SK-N-SH (cell line): ENCODE measurements at regions of chr13 and their contacts with region 1.

Region 1: GRCh38 chr13:29508130-29508875 is 87.2 kb downstream of the SLC7A1 start:
- DNase-seq: peak; percentile 90
- H3K4me3 ChIP-seq: peak overlapping the region in 1 of 2 experiments; percentile 32; a peak in 1 of 4 replicates
- H3K27ac ChIP-seq: peak overlapping the region in 1 of 2 experiments; percentile 78; a peak in 2 of 4 replicates
- H3K4me1 ChIP-seq: peaks cover 0 to 26% of the 10 kb centered on the region in 2 experiments; a peak in 2 of 4 replicates
- H3K27me3 ChIP-seq: no peaks in the 10 kb centered on the region
- CTCF ChIP-seq: peak; percentile 96
- EP300 ChIP-seq: peak in 1 of 2 experiments; percentile 53; a peak in 1 of 4 replicates
- RAD21 ChIP-seq: peak; percentile 95

Region 2: DNA sequence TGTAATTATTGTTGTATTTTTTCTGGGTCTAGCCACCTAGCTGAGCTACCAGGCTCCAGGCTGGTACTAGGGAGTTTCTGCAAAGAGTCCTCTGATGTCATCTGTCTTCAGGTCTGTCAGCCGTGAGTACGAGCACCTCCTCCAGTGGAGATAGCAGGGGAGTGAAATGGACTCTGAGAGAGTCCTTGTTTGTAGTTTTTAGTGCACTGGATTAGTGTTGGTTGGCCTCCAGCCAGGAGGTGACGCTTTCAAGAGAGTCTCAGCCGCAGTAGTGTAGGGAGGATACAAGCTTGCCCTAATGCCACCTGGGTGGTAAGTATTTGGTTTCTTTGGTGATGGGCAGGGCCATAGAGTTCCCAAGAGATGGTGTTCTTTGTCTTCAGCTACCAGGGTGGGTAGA is 297.6 kb before region 1 on chr13:
- CTCF ChIA-PET with region 1: no interaction called
- POLR2A ChIA-PET with region 1: no interaction called
- DNase-seq: no peak
- H3K4me3 ChIP-seq: no peak overlapping the region
- H3K27ac ChIP-seq: no peak overlapping the region
- H3K4me1 ChIP-seq: no peaks in the 10 kb centered on the region
- H3K27me3 ChIP-seq: no peaks in the 10 kb centered on the region
- CTCF ChIP-seq: no peak
- EP300 ChIP-seq: no peak
- RAD21 ChIP-seq: no peak

Region 3: DNA sequence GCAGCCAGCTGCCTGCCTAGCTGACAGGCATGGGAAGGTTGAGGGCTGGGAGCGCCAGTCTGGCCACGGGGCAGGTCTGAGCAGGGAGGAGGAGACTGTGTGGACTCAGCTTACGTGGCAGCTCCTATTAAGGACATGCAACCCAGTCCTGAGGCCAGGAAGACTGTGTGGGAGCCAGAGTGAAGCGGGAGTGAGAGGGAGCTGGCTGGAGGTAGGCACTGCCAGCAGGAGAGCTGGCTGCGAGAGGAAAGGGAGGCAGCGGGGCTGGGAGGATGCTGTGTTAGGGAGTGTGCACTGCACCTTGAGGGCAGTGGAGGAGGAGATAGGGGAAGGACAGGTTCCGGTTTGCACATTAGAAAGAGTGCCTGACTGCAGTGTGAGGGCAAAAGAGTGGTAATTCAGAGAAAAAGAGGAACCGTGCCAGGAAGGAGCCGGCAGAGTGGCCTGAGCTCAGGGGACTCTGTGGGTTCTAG is 12.0 kb before region 1 on chr13:
- CTCF ChIA-PET with region 1: interaction called, 39 read pairs
- POLR2A ChIA-PET with region 1: no interaction called
- DNase-seq: no peak
- H3K4me3 ChIP-seq: no peak overlapping the region
- H3K27ac ChIP-seq: no peak overlapping the region
- H3K4me1 ChIP-seq: peaks cover 0 to 12% of the 10 kb centered on the region in 2 experiments; a peak in 2 of 4 replicates
- H3K27me3 ChIP-seq: no peaks in the 10 kb centered on the region; the same call in 1 of the 2 replicates
- CTCF ChIP-seq: no peak
- EP300 ChIP-seq: no peak
- RAD21 ChIP-seq: no peak

Region 4: DNA sequence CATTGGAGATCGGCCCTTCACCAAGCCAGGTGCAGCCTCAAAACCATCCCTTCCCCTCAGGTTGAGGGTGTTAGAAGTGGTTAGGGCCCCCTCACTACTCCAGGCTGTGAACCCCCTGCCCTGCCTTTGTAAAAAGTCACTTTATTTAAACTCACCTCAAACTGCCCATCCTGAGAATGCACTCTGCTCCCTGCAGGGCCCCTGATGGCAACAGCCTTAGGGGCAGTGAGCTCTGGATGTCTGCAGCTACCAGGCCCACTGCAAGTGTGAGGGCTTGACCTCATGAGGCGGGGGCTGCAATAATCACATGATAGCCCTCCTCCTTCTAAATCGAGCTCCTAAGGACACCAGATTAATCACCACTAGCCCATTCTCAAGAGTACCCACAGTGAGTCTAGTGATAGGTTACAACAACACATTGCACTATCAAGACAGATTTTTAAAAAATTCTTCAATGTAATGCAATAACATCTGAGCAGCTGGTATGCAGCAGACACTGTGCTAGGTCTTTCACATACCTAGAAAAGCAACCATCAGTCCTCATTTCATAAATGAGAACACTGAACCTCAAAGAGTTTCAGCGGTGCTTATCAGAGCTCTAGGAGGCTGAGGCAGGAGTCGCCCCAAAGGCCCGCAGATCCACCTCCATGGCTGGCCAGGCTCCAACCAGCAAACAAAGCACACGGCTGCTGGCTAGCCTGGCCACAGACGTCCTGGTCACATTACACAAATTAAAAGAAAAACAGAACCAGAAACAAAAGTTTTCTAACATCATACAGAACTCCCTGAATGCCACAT is 61.1 kb after region 1 on chr13:
- CTCF ChIA-PET with region 1: interaction called, 13 read pairs
- POLR2A ChIA-PET with region 1: no interaction called
- DNase-seq: peak; percentile 52
- H3K4me3 ChIP-seq: no peak overlapping the region
- H3K27ac ChIP-seq: peak overlapping the region in 1 of 2 experiments; percentile 75; a peak in 2 of 4 replicates
- H3K4me1 ChIP-seq: peaks cover 11 to 37% of the 10 kb centered on the region in 2 experiments; a peak in 3 of 4 replicates
- H3K27me3 ChIP-seq: no peaks in the 10 kb centered on the region
- CTCF ChIP-seq: no peak
- EP300 ChIP-seq: no peak
- RAD21 ChIP-seq: no peak

Region 5: DNA sequence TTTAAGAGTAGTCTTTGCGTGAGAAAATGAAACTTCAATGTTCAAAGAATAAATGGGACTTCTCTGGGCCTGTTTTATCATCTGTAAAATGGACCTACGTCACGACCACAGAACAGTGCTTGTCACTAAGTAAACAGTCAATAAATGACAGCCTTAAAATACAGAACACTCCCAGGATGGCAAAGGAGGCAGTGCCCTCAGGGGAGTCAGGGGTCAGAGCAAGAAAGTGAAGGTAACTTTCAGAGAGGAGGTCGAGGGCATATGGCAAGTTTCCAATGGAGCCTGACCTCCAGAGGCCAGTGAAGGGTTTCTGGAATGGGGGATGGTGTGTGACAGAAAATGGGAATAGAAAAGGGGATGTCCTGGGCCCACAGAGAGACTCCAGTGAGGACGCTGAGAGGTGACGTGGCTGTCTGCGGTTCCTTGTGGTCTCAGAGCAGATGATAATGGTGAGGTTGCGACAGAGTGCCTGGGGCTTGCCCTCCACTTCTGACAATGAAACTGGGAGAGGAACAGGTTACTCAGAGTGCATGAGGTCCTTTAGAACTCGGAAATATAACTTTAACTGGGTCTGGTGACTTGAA is 250.3 kb after region 1 on chr13:
- CTCF ChIA-PET with region 1: interaction called, 11 read pairs
- POLR2A ChIA-PET with region 1: no interaction called
- DNase-seq: no peak
- H3K4me3 ChIP-seq: no peak overlapping the region
- H3K27ac ChIP-seq: no peak overlapping the region
- H3K4me1 ChIP-seq: peaks cover 0 to 4% of the 10 kb centered on the region in 2 experiments; a peak in 1 of 4 replicates
- H3K27me3 ChIP-seq: no peaks in the 10 kb centered on the region
- CTCF ChIP-seq: no peak
- EP300 ChIP-seq: no peak
- RAD21 ChIP-seq: no peak

Region 6: GRCh38 chr13:30105381-30105780 is 597.1 kb after region 1 on chr13:
- CTCF ChIA-PET with region 1: interaction called, 15 read pairs
- POLR2A ChIA-PET with region 1: no interaction called
- DNase-seq: no peak
- H3K4me3 ChIP-seq: no peak overlapping the region
- H3K27ac ChIP-seq: no peak overlapping the region
- H3K4me1 ChIP-seq: peaks cover 0 to 12% of the 10 kb centered on the region in 2 experiments; a peak in 2 of 4 replicates
- H3K27me3 ChIP-seq: no peaks in the 10 kb centered on the region
- CTCF ChIP-seq: no peak
- EP300 ChIP-seq: no peak
- RAD21 ChIP-seq: 0 out of 2 replicates have a peak, but pooled peaks have one; percentile 11